ENCODE measurements at regions of chr5 and their contacts with region 1.

Region 1: GRCh38 chr5:42889311-42889933 is 77.7 kb upstream of the SELENOP start:
- DNase-seq: no peak
- ATAC-seq: peak; percentile 97; the same call in 2 of the 3 replicates
- H3K4me3 ChIP-seq: no peak overlapping the region
- H3K27ac ChIP-seq: no peak overlapping the region
- H3K4me1 ChIP-seq: no peaks in the 10 kb centered on the region
- H3K27me3 ChIP-seq: peaks cover 0 to 2% of the 10 kb centered on the region in 2 experiments; a peak in 2 of 4 replicates
- CTCF ChIP-seq: peak; percentile 85 to 92 (median 90)
- EP300 ChIP-seq: no peak
- POLR2A ChIP-seq: no peak
- RAD21 ChIP-seq: peak; percentile 96

Region 2: GRCh38 chr5:41856644-41857491 is 1032.6 kb before region 1 on chr5:
- CTCF ChIA-PET with region 1: interaction called, 19 read pairs
- POLR2A ChIA-PET with region 1: no interaction called
- RAD21 ChIA-PET with region 1: interaction called, 10 read pairs
- SMC1A ChIA-PET with region 1: interaction called, 7 read pairs
- in situ Hi-C with region 1: no loop called
- intact Hi-C with region 1: loop called (anchors 5 kb)
- DNase-seq: no peak
- ATAC-seq: peak; percentile 98
- H3K4me3 ChIP-seq: no peak overlapping the region
- H3K27ac ChIP-seq: no peak overlapping the region
- H3K4me1 ChIP-seq: no peaks in the 10 kb centered on the region
- H3K27me3 ChIP-seq: no peaks in the 10 kb centered on the region
- CTCF ChIP-seq: peak; percentile 57 to 83 (median 75)
- EP300 ChIP-seq: no peak
- POLR2A ChIP-seq: no peak
- RAD21 ChIP-seq: peak; percentile 90

Region 3: GRCh38 chr5:42005561-42006153 is 883.8 kb before region 1 on chr5:
- CTCF ChIA-PET with region 1: interaction called, 7 read pairs
- POLR2A ChIA-PET with region 1: no interaction called
- RAD21 ChIA-PET with region 1: interaction called, 13 read pairs
- SMC1A ChIA-PET with region 1: interaction called, 9 read pairs
- in situ Hi-C with region 1: no loop called
- intact Hi-C with region 1: no loop called
- DNase-seq: no peak
- ATAC-seq: peak; percentile 79
- H3K4me3 ChIP-seq: no peak overlapping the region
- H3K27ac ChIP-seq: no peak overlapping the region
- H3K4me1 ChIP-seq: no peaks in the 10 kb centered on the region
- H3K27me3 ChIP-seq: no peaks in the 10 kb centered on the region
- CTCF ChIP-seq: peak; percentile 48 to 72 (median 66)
- EP300 ChIP-seq: no peak
- POLR2A ChIP-seq: no peak
- RAD21 ChIP-seq: peak; percentile 55

Region 4: DNA sequence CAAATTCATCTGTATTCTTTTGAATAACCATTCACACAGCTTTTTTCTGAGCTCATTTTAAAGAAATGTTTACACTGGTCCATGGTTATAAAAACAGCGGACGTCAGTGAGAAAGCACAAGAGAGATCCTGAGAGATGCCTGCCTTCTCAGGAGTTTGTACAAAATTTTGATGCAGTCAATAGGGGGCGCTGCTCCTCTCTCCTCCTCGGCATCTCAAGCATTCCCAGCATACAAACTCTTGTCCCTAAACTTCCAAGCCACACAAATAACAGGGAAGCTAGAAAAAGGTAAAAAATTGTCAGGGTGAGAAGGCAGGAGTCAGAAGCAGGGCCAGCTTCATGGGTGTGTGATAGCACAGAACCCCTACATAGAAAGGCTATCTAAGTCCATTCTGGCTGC is 144.0 kb before region 1 on chr5:
- CTCF ChIA-PET with region 1: interaction called, 13 read pairs
- POLR2A ChIA-PET with region 1: no interaction called
- RAD21 ChIA-PET with region 1: interaction called, 15 read pairs
- SMC1A ChIA-PET with region 1: interaction called, 12 read pairs
- in situ Hi-C with region 1: no loop called
- intact Hi-C with region 1: no loop called
- DNase-seq: no peak
- ATAC-seq: no peak
- H3K4me3 ChIP-seq: no peak overlapping the region
- H3K27ac ChIP-seq: no peak overlapping the region
- H3K4me1 ChIP-seq: no peaks in the 10 kb centered on the region
- H3K27me3 ChIP-seq: no peaks in the 10 kb centered on the region
- CTCF ChIP-seq: peak; percentile 7 to 35 (median 25); a peak in 2 of 6 replicates
- EP300 ChIP-seq: no peak
- POLR2A ChIP-seq: no peak
- RAD21 ChIP-seq: 0 out of 2 replicates have a peak, but pooled peaks have one; percentile 22

Region 5: DNA sequence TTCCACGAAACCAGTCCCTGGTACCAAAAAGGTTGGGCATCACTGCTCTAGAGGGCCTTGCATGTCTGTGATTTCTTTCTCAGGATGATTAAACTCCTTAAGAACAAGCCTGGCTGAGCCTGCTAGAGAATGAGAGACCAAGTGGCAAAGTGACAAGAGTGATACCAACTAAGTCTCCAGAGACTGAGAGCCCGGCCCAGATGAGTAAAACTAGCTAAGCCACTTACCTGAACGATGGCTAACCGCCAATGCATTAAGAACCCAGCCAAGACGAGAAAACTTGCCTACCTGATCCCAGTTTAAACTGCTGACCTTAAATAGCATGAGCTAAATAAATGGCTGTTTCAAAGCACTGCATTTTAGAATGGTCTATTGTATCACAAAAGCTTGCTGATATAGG is 138.4 kb before region 1 on chr5:
- CTCF ChIA-PET with region 1: interaction called, 10 read pairs
- POLR2A ChIA-PET with region 1: no interaction called
- RAD21 ChIA-PET with region 1: interaction called, 15 read pairs
- SMC1A ChIA-PET with region 1: interaction called, 13 read pairs
- in situ Hi-C with region 1: no loop called
- intact Hi-C with region 1: no loop called
- DNase-seq: no peak
- ATAC-seq: no peak
- H3K4me3 ChIP-seq: no peak overlapping the region
- H3K27ac ChIP-seq: no peak overlapping the region
- H3K4me1 ChIP-seq: no peaks in the 10 kb centered on the region
- H3K27me3 ChIP-seq: no peaks in the 10 kb centered on the region
- CTCF ChIP-seq: no peak
- EP300 ChIP-seq: no peak
- POLR2A ChIP-seq: no peak
- RAD21 ChIP-seq: no peak

Region 6: DNA sequence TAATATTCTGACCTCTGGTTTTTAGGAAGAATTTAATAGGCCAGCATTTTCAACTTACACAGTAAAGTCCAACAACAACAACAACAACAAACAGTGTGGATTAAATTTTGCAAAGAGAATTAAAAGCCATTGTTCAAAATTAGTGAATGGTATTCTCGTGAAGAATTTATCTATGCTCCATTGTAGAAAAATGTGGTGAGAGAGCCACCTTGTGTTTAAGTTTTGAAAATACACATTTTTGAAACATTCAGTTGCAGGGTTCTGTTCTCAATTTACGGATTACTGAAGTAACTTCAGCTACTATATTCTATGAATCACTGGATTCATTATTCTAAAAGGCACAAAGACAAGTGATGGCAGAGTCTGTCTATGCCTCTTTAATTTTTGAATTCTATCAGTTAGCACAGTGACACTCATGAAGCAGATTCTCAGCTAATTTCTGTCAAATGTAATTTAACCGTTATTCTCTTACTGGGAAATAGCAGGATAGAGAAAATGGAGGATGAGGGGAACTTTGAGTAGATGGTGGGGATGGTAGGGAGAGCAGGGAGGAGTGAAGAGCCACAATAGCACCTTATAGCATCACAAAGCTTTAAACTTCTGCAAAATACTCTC is 121.8 kb before region 1 on chr5:
- CTCF ChIA-PET with region 1: interaction called, 29 read pairs
- POLR2A ChIA-PET with region 1: no interaction called
- RAD21 ChIA-PET with region 1: interaction called, 28 read pairs
- SMC1A ChIA-PET with region 1: interaction called, 17 read pairs
- in situ Hi-C with region 1: no loop called
- intact Hi-C with region 1: loop called (anchors 5 kb)
- DNase-seq: no peak
- ATAC-seq: peak; percentile 53
- H3K4me3 ChIP-seq: no peak overlapping the region
- H3K27ac ChIP-seq: no peak overlapping the region
- H3K4me1 ChIP-seq: no peaks in the 10 kb centered on the region
- H3K27me3 ChIP-seq: no peaks in the 10 kb centered on the region
- CTCF ChIP-seq: peak; percentile 31 to 56 (median 42); a peak in 4 of 6 replicates
- EP300 ChIP-seq: no peak
- POLR2A ChIP-seq: no peak
- RAD21 ChIP-seq: peak; percentile 70

Region 7: DNA sequence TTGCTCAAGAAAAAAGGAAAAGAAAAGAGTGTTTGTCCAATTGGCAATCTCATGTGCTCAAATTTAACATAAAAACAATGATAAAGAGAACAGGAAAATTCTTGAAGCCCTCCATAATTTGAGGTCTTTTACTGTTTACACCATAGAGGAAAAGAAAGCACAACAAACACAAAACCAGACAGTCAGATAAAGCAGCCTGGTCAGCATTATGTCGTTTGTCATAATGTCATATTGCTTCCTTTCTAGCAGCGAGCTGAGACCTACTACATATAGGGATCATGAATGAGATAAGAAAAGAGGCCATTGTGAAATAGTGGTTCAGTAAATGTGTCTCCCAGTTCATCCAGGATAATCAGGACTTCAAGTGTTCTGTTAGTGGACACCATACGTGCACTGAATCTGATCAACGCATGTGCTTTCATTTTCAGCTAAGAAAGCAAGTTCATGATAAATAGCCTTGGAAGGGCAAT is 13.0 kb before region 1 on chr5:
- CTCF ChIA-PET with region 1: interaction called, 25 read pairs
- POLR2A ChIA-PET with region 1: no interaction called
- RAD21 ChIA-PET with region 1: interaction called, 15 read pairs
- SMC1A ChIA-PET with region 1: interaction called, 11 read pairs
- in situ Hi-C with region 1: no loop called
- intact Hi-C with region 1: no loop called
- DNase-seq: no peak
- ATAC-seq: no peak
- H3K4me3 ChIP-seq: no peak overlapping the region
- H3K27ac ChIP-seq: no peak overlapping the region
- H3K4me1 ChIP-seq: no peaks in the 10 kb centered on the region
- H3K27me3 ChIP-seq: no peaks in the 10 kb centered on the region; a peak in 1 of 4 replicates
- CTCF ChIP-seq: no peak
- EP300 ChIP-seq: no peak
- POLR2A ChIP-seq: no peak
- RAD21 ChIP-seq: no peak

Region 8: DNA sequence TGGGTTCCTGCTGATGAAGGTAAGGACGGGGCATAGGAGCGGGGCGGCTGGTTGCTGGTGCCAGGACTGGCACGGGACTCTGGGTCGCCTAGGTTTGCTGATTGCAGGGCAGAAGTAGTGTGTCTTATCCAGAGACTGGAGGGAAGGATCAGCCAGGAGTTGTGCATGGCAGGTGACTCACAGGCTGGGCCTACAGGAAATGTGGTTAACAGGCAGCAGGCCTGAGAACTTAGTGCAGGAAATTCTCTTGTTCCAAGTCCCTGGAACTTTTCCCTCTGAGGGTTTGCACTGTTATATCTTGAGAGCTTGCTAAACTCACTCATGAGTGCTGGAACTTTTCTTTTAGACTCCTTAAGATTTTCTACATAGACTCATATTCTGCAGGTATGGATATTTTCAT is 55.6 kb after region 1 on chr5:
- CTCF ChIA-PET with region 1: no interaction called
- POLR2A ChIA-PET with region 1: no interaction called
- RAD21 ChIA-PET with region 1: no interaction called
- SMC1A ChIA-PET with region 1: no interaction called
- in situ Hi-C with region 1: no loop called
- intact Hi-C with region 1: no loop called
- DNase-seq: no peak
- ATAC-seq: no peak
- H3K4me3 ChIP-seq: no peak overlapping the region
- H3K27ac ChIP-seq: no peak overlapping the region
- H3K4me1 ChIP-seq: peaks cover 9% of the 10 kb centered on the region
- H3K27me3 ChIP-seq: no peaks in the 10 kb centered on the region; a peak in 1 of 4 replicates
- CTCF ChIP-seq: no peak
- EP300 ChIP-seq: no peak
- POLR2A ChIP-seq: no peak
- RAD21 ChIP-seq: no peak